Mammary epithelial cell (primary cell): ENCODE measurements at regions of chr7 and their contacts with region 1.

Region 1: GRCh38 chr7:17940302-17940883 is at the start of gene SNX13:
- DNase-seq: peak; percentile 86
- H3K4me3 ChIP-seq: peak within 1 kb of the TSS; percentile 62 to 77 (median 74)
- H3K27ac ChIP-seq: peak within 1 kb of the TSS; percentile 77
- H3K4me1 ChIP-seq: peaks cover 8% of the 10 kb centered on the region
- H3K27me3 ChIP-seq: no peaks in the 10 kb centered on the region
- CTCF ChIP-seq: peak in 1 of 2 donors; percentile 33
- total RNA-seq, gene SNX13: 35.5 to 62.8 TPM

Region 2: DNA sequence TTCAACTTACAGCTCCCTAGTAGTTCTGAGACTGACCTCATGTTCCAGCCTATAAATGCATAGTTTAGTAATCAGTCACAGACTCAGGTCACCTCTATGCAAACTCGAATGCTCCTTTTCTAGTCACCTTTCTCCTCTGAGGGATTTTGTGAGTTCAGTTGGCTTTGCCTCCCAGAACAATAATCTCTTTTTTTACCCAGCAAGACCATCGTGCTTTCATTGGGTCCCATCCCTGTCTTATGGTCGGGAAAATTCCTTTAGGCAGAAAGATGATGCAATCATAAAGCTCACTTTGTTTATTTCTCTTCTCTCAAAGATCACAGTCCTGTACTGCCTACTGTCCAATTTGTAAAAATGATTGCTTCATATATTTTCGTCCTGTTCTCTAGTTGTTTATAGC is 1138.7 kb after region 1 on chr7:
- CTCF ChIA-PET with region 1: no interaction called
- dilution Hi-C with region 1: no loop called
- in situ Hi-C with region 1: no loop called
- intact Hi-C with region 1: loop called (anchors 5 kb)
- DNase-seq: peak; percentile 60
- H3K4me3 ChIP-seq: no peak overlapping the region
- H3K27ac ChIP-seq: no peak overlapping the region
- H3K4me1 ChIP-seq: peaks cover 6% of the 10 kb centered on the region
- H3K27me3 ChIP-seq: no peaks in the 10 kb centered on the region
- CTCF ChIP-seq: no peak